ENCODE measurements at regions of chr10 and their contacts with region 1.

Region 1: DNA sequence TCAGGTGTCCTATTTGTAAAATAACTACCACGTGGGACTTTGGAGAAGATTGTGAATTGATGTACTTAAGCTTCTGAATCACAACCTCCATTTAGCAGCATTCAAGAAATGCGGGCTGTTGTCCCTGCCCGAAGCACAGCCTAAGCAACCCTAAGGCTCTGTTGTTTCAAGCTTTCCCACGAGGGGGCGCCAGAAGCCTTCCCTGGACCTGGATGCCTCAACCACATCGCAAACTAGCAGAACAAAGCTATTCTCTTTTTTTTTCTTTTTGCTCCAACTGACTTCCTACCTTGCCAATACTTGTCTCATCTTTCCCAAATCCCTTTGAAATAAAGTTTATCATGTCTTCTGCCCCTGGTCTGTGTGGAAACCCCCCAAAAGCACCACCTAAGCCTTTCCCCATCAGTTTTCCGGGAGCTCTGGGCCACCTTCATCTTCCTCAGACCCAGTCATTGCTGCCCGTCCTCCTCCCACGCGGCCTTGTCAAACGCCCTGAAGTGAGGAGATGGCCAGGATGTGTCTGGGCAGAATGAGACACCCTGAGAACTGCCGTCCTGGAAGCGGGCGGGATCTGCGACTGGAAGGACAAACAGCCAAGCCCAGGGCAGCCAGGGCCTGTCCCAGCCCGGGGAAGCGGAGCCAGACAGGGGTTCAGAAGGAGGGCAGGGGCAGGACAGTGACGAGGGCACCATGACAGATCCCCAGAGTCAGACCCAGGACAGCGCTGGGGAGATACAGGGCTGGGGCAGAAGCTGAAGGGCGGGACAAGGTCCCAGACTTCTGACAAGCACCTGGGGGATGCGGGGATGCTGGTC is 112.7 kb downstream of the SLIT1 start:
- DNase-seq: peak; percentile 92
- ATAC-seq: peak; percentile 75
- H3K4me3 Mint-ChIP-seq: no peak overlapping the region
- H3K27ac Mint-ChIP-seq: no peak overlapping the region
- H3K4me1 Mint-ChIP-seq: peaks cover 11% of the 10 kb centered on the region
- H3K27me3 Mint-ChIP-seq: peaks cover 18% of the 10 kb centered on the region

Region 2: GRCh38 chr10:97037365-97038361 is 35.4 kb before region 1 on chr10:
- CTCF ChIA-PET with region 1: interaction called, 32 read pairs
- POLR2A ChIA-PET with region 1: no interaction called
- intact Hi-C with region 1: no loop called
- DNase-seq: peak; percentile 87
- ATAC-seq: peak; percentile 96
- H3K4me3 Mint-ChIP-seq: peak overlapping the region; percentile 45
- H3K27ac Mint-ChIP-seq: no peak overlapping the region
- H3K4me1 Mint-ChIP-seq: peaks cover 12% of the 10 kb centered on the region
- H3K27me3 Mint-ChIP-seq: no peaks in the 10 kb centered on the region

Region 3: GRCh38 chr10:97179731-97180362 is 106.8 kb after region 1 on chr10:
- CTCF ChIA-PET with region 1: interaction called, 14 read pairs
- POLR2A ChIA-PET with region 1: interaction called, 3 read pairs
- intact Hi-C with region 1: no loop called
- DNase-seq: peak; percentile 30
- ATAC-seq: peak; percentile 44
- H3K4me3 Mint-ChIP-seq: no peak overlapping the region
- H3K27ac Mint-ChIP-seq: no peak overlapping the region
- H3K4me1 Mint-ChIP-seq: peaks cover 2% of the 10 kb centered on the region
- H3K27me3 Mint-ChIP-seq: peaks cover 29% of the 10 kb centered on the region

Region 4: DNA sequence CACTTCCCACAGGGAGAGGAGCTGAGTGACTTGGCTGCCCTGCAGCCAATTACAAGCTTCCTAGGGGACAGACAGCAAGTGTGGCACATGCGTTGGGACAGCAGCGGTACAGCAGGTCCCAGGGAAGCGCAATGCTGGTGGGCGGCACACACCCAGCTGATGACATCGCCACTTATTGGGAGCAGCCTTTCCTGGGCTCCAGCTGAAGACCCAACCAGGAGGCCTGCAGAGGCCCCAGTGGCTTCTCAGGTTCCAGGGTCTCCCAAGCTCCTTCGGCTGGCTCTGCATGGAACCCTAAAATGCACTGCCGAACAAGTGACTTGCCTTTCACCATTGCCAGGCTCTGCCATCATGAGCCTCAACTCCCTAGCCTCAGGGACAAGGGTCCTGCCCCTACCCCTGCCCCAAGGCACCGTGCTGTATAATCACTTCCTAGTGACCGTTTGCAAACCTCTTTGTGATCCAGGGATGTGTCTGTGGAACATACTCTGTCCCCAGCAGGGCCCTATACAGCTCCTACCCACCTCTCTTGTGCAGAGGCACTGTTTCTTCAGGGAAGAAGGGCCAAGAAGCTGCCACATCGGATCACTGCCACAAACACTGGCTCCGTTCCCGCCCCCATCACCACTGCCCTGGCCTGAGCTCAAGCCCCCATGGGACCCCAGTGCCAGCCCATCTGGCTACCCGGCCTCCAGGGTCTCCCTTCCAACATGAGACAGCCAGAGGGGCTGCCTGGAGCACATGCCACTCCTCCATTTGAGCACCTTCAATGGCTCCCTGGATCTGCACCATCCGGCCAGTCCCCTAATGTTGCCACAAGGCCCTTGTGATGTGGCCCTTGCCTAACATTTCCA is 132.0 kb after region 1 on chr10:
- CTCF ChIA-PET with region 1: interaction called, 169 read pairs
- POLR2A ChIA-PET with region 1: interaction called, 3 read pairs
- intact Hi-C with region 1: loop called (anchors 1 kb)
- DNase-seq: no peak
- ATAC-seq: no peak
- H3K4me3 Mint-ChIP-seq: no peak overlapping the region
- H3K27ac Mint-ChIP-seq: no peak overlapping the region
- H3K4me1 Mint-ChIP-seq: no peaks in the 10 kb centered on the region
- H3K27me3 Mint-ChIP-seq: no peaks in the 10 kb centered on the region

Region 5: GRCh38 chr10:97217299-97217698 is 144.2 kb after region 1 on chr10:
- CTCF ChIA-PET with region 1: interaction called, 169 read pairs
- POLR2A ChIA-PET with region 1: no interaction called
- intact Hi-C with region 1: no loop called
- DNase-seq: no peak
- ATAC-seq: no peak
- H3K4me3 Mint-ChIP-seq: no peak overlapping the region
- H3K27ac Mint-ChIP-seq: peak overlapping the region; percentile 6
- H3K4me1 Mint-ChIP-seq: peaks cover 27% of the 10 kb centered on the region
- H3K27me3 Mint-ChIP-seq: no peaks in the 10 kb centered on the region

Region 6: DNA sequence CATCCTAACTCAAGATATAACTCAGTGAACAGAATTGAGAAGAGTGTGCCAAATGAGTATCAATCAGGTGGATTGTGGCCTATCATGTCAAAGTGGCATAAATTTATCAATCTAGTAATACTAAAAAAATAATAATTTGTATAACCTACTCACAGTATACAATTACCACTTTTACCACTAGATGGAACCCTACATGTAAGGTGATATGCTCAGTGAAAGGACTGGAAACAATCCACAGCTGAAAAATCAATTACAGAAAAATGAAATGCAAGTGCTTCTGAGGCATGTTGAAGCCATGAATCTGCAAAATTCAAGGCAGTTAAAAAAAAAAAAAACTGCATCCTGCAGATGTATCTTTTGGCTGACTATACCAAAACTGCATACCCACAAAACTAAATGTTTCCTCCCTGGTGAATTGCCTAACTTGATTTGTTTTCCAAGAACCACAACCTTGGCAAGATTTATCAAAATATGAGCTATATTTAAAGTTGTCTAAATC is 205.5 kb after region 1 on chr10:
- CTCF ChIA-PET with region 1: interaction called, 10 read pairs
- POLR2A ChIA-PET with region 1: no interaction called
- intact Hi-C with region 1: no loop called
- DNase-seq: no peak
- ATAC-seq: peak; percentile 64
- H3K4me3 Mint-ChIP-seq: no peak overlapping the region
- H3K27ac Mint-ChIP-seq: no peak overlapping the region
- H3K4me1 Mint-ChIP-seq: peaks cover 22% of the 10 kb centered on the region
- H3K27me3 Mint-ChIP-seq: no peaks in the 10 kb centered on the region

Measured in activated CD4-positive, alpha-beta T cell treated with anti-CD3 and anti-CD28 coated beads for 36 hours (primary cell).